ENCODE measurements at regions of chr3 and their contacts with region 1.

Region 1: DNA sequence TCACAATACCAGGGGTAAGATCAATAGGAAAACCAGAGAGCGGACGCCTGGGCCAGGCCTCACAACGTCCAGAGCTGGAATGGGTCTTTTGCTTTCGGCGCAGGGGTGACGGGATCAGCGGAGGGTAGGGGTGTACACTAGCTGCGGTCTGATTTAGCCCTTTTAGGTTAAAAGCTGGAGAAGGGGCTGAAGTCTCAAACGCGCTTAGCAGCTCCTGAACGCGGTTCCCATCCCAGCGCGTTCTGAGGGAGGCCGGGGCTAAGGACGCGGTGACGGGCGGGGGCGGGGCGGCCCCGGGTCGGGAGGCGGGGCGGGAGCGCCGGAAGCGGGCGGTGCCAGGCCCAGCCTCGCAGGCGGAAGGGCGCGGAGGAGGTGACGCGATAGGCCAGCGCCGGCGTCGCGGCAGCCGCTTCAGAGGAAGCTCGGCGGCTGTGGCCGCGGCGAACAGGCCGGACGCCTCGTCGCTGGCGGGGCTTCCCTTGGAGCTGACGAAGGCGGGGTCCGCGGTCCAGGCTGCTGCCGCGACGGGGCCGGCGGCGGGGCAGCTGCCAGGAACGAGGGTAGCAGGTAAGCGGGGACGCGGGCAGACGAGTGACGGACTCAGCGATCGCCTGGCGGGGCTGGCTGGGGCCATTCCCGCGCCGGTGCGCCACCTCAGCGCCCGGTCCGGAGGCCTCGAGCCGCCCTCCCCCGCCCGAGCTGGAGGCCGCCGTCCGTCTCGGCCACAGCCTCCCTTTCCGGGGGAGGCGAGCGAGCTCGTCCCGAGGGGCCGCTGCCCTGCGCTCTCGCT is at the start of gene SENP5:
- DNase-seq: peak; percentile 97
- total RNA-seq, gene SENP5: 21.6 TPM

Region 2: GRCh38 chr3:196568246-196569002 is 299.3 kb before region 1 on chr3 and contains the starts of genes FBXO45 and WDR53:
- intact Hi-C with region 1: loop called (anchors 5 kb)
- DNase-seq: peak; percentile 99
- total RNA-seq, gene FBXO45: 6.4 TPM
- total RNA-seq, gene WDR53: 8.4 TPM

Region 3: GRCh38 chr3:196665962-196666867 is 201.5 kb before region 1 on chr3:
- intact Hi-C with region 1: no loop called
- DNase-seq: no peak

Region 4: DNA sequence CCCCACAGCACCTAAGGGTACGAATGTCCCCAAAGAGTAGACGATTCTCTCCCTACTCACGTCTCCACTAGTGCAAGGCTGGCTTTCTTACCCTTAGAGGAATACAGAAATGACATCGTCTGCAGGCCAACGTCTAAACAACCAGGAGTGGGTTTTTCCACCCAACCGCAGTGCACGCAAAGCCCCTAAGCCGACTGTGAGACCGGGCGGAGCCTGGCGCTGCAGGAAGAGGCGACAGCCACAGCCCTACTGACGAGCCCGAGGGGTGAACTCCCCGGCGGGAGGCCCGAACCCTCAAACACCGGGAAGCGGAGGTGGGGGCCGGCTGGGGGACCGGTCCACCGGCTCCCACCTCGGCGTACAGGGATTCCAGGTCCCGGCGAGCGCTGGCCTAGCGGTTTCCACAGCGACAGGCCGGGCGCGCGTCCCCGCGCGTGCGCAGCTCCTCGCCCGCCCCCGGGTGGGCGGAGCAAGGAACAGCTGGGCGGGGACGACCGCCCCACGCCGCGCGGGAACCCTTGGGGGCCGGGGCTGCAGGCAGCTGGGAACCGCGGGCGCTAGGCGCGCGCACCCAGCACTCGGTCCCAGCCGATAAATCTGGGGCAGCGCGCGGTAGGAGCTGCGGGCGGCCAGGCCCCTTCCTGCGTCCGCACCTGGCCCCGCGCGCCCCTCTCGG is 155.7 kb before region 1 on chr3 and contains the starts of genes CEP19 and PIGX:
- intact Hi-C with region 1: loop called (anchors 10 kb)
- DNase-seq: peak; percentile 96
- total RNA-seq, gene CEP19: 1.2 TPM
- total RNA-seq, gene PIGX: 16.9 TPM

Region 5: GRCh38 chr3:196739671-196740480 is 127.8 kb before region 1 on chr3 and contains the start of gene PAK2:
- intact Hi-C with region 1: loop called (anchors 1 kb)
- DNase-seq: peak; percentile 98
- total RNA-seq, gene PAK2: 43.3 TPM

Region 6: DNA sequence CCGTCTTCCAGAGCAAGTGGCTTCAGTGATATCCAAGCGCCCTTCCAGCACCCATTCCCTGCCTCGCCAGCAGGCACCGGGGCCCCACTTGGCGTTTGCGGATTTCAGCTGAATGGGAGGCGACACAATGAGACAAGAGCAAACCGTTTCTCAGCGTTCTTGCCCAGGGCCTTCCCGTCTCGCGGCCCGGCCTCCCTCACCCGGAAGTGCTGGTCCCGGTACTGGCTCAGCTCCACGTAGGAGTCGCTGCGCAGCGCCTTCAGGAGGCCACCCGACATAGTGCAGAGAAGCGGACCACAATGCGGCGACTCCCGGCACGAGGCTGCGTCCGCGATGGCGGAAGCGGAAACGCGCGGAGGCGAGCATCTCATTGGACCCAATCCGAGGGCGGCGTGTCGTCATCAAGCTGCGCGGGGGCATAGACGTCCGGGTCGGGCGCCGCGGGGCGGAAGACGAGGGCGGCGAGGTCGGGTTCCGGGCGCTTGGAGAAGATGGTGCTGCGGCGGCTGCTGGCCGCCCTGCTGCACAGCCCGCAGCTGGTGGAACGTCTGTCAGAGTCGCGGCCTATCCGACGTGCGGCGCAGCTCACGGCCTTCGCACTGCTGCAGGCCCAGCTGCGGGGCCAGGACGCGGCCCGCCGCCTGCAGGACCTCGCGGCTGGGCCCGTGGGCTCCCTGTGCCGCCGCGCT is 74.7 kb after region 1 on chr3 and contains the start of gene NCBP2:
- intact Hi-C with region 1: loop called (anchors 1 kb)
- DNase-seq: peak; percentile 99
- total RNA-seq, gene NCBP2: 47.1 TPM

Region 7: GRCh38 chr3:197728487-197728886 is 860.8 kb after region 1 on chr3:
- intact Hi-C with region 1: no loop called
- DNase-seq: no peak